CD4-positive, alpha-beta memory T cell (primary cell): ENCODE measurements at regions of chr17 and their contacts with region 1.

Region 1: DNA sequence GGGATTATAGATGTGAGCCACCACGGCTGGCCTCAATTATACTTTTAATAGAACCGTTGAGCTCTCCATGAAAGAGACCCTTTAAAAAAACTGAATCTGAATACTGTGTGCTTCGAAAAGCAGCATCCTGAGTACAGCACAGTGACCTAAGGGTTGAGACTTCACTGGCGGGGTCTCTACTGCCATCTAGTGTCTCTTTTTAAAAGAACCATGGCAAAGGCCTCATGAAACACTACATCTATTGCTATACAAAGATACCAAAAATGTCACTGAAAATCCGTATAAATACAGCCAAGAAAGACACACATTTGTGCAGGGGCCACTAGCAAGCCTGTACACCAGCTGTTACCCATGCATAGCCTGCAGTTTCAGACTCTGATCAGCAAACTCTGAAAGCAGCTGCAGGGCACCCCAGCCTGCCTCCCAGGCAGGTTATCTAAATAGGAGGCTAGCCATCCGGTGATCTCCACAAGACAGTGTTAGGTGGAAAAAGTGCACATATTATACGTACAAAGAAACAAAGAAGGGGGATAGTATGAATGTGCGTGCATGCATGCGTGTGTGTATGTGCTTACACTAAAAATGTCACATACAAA is 35.3 kb downstream of the NPLOC4 start:
- DNase-seq: peak in 4 of 5 donors; percentile 56 to 66 (median 61)
- H3K4me3 ChIP-seq: no peak overlapping the region
- H3K4me3 Mint-ChIP-seq: no peak overlapping the region
- H3K27ac ChIP-seq: no peak overlapping the region
- H3K27ac Mint-ChIP-seq: peak overlapping the region in 4 of 7 donors; percentile 1 to 79 (median 55)
- H3K4me1 ChIP-seq: no peaks in the 10 kb centered on the region
- H3K4me1 Mint-ChIP-seq: peaks cover 3 to 14% (median 7%) of the 10 kb centered on the region in 4 donors
- H3K27me3 ChIP-seq: no peaks in the 10 kb centered on the region
- H3K27me3 Mint-ChIP-seq: no peaks in the 10 kb centered on the region

Region 2: DNA sequence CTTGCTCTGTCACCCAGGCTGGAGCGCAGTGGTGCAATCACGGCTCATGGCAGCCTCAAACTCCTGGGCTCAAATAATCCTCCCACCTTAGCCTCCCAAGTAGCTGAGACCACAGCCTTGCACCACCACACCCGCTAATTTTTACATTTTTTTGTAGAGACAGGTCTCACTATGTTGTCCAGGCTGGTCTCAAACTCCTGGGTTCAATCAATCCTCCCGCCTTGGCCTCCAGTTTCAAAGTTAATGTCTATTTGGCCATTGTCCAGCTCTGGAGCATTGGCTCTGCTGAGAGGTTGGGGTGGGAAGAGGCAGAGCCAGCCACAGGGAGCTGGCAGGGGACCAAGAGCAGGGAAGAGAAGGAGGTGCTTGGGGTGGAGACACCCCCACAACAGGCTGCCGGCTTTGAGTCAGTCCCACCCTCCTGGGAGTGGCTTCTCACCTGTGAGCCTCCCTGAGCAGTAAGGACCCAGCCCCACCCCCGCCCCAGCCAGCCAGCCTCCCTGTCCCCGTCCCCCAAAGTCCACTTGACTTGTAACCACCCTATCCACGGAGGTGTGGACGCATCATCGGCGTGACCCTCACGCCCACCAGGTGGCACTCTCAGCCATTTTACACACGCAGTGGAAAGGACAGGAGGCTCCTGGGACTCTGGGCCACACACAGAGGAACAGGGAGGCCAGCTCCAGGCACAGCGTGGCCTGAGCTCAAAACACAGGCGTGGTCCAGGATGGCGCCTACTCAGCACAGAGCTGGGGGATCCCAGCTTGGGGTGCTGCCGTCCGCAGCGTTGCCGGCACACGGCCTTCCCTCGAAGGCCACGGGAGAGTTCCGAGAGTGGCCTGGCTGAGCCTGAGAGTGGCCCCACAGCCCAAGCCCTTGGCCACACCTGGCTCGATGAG is 459.1 kb before region 1 on chr17:
- CTCF ChIA-PET with region 1: interaction called, 11 read pairs
- POLR2A ChIA-PET with region 1: no interaction called
- intact Hi-C with region 1: no loop called
- DNase-seq: peak; percentile 41 to 51 (median 49)
- H3K4me3 ChIP-seq: no peak overlapping the region
- H3K4me3 Mint-ChIP-seq: no peak overlapping the region
- H3K27ac ChIP-seq: no peak overlapping the region
- H3K27ac Mint-ChIP-seq: no peak overlapping the region
- H3K4me1 ChIP-seq: no peaks in the 10 kb centered on the region
- H3K4me1 Mint-ChIP-seq: peaks cover 0 to 3% (median 0%) of the 10 kb centered on the region in 4 donors
- H3K27me3 ChIP-seq: no peaks in the 10 kb centered on the region
- H3K27me3 Mint-ChIP-seq: peaks cover 2% of the 10 kb centered on the region in 2 donors

Region 3: DNA sequence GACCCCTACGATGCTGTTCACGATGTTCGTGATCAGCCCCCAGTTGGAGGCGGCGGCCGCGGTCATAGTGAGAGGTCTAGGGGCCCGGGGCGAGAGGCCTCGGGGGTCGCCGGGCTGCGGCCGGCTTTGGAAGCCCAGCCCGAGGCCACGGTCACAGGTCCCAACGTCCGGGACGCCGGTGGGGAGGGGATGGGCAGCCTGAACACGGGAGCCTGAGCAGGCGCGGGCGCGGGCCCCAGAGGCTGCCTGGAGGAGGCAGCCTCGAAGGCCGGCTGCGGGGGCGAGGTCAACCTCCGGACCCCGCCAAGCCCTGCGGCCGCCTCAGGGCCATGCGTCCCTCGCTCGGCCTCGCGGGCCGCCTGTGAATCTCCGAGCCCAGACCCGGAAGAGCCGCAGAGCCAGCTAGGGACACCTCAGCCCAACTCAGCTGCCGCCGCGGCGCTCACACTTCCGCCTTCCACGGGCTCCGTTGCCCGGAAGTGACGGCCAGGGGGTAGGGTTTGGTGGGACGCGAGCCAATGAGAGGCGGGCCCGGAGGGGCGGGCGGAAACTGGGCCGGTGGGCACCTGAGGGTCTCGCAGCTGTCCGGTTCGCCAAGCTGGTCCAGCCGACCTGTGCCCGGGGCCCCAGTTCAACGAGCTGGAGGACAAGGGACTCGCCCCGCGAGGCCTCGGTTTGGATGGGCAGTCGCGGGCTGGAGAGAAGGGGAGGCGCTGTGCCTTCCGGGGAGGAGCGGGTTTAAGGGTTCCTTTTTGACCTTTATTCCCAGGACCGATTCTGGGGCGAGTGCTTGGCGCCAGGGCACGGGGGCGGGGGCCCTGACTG is 306.6 kb before region 1 on chr17 and contains the start of gene SLC38A10:
- CTCF ChIA-PET with region 1: interaction called, 5 read pairs
- POLR2A ChIA-PET with region 1: no interaction called
- intact Hi-C with region 1: loop called (anchors 1 kb)
- DNase-seq: peak; percentile 87 to 93 (median 89)
- H3K4me3 ChIP-seq: peak within 1 kb of the TSS; percentile 68 to 75
- H3K4me3 Mint-ChIP-seq: peak within 1 kb of the TSS; percentile 93 to 98 (median 96)
- H3K27ac ChIP-seq: peak within 1 kb of the TSS; percentile 97
- H3K27ac Mint-ChIP-seq: peak within 1 kb of the TSS; percentile 96 to 99 (median 98)
- H3K4me1 ChIP-seq: peaks cover 45% of the 10 kb centered on the region
- H3K4me1 Mint-ChIP-seq: peaks cover 17 to 56% (median 39%) of the 10 kb centered on the region in 4 donors
- H3K27me3 ChIP-seq: no peaks in the 10 kb centered on the region
- H3K27me3 Mint-ChIP-seq: no peaks in the 10 kb centered on the region
- total RNA-seq, gene SLC38A10: 112 to 113 TPM

Region 4: GRCh38 chr17:81553018-81553615 is 48.5 kb before region 1 on chr17:
- CTCF ChIA-PET with region 1: interaction called, 3 read pairs
- POLR2A ChIA-PET with region 1: interaction called, 3 read pairs
- intact Hi-C with region 1: loop called (anchors 2 kb)
- DNase-seq: peak; percentile 77 to 91 (median 77)
- H3K4me3 ChIP-seq: peak overlapping the region; percentile 81
- H3K4me3 Mint-ChIP-seq: peak overlapping the region; percentile 89 to 93 (median 90)
- H3K27ac ChIP-seq: peak overlapping the region; percentile 64
- H3K27ac Mint-ChIP-seq: peak overlapping the region; percentile 91 to 97 (median 94)
- H3K4me1 ChIP-seq: peaks cover 24% of the 10 kb centered on the region
- H3K4me1 Mint-ChIP-seq: peaks cover 17 to 43% (median 28%) of the 10 kb centered on the region in 4 donors
- H3K27me3 ChIP-seq: no peaks in the 10 kb centered on the region
- H3K27me3 Mint-ChIP-seq: no peaks in the 10 kb centered on the region

Region 5: GRCh38 chr17:81612172-81612970 is 10.7 kb after region 1 on chr17:
- CTCF ChIA-PET with region 1: interaction called, 11 read pairs
- POLR2A ChIA-PET with region 1: no interaction called
- intact Hi-C with region 1: no loop called
- DNase-seq: no peak
- H3K4me3 ChIP-seq: no peak overlapping the region
- H3K4me3 Mint-ChIP-seq: no peak overlapping the region
- H3K27ac ChIP-seq: no peak overlapping the region
- H3K27ac Mint-ChIP-seq: peak overlapping the region in 3 of 7 donors; percentile 8 to 43 (median 42)
- H3K4me1 ChIP-seq: peaks cover 17% of the 10 kb centered on the region
- H3K4me1 Mint-ChIP-seq: peaks cover 15 to 32% (median 19%) of the 10 kb centered on the region in 4 donors
- H3K27me3 ChIP-seq: no peaks in the 10 kb centered on the region
- H3K27me3 Mint-ChIP-seq: no peaks in the 10 kb centered on the region